Activated naive CD4-positive, alpha-beta T cell treated with anti-CD3 and anti-CD28 coated beads for 36 hours (primary cell): ENCODE measurements at regions of chr6 and their contacts with region 1.

Region 1: GRCh38 chr6:129251669-129252376 is 368.9 kb downstream of the LAMA2 start:
- DNase-seq: peak; percentile 76
- H3K4me3 Mint-ChIP-seq: no peak overlapping the region
- H3K27ac Mint-ChIP-seq: no peak overlapping the region
- H3K4me1 Mint-ChIP-seq: peaks cover 23% of the 10 kb centered on the region
- H3K27me3 Mint-ChIP-seq: peaks cover 13% of the 10 kb centered on the region

Region 2: DNA sequence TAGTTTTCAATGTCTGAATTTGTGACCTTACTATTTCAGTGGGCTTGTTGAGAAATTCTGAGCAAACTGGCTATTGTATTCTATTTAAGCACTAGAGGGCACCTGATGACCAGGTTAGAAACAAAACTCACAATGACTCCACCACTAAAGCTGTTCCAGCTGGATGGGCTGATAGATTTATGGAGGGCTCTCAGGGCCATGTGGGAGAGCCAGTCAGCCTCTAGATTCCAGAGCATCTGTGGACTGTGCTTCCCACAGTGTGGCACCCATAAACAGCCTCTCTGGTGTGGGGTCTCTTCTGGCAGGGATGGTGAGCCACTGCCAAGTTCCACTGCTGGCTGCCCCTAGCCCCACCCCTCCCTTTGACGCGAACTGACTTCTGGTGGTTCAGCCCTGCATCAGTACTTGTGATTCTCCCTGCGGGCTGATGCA is 1645.7 kb before region 1 on chr6:
- CTCF ChIA-PET with region 1: no interaction called
- intact Hi-C with region 1: loop called (anchors 5 kb)
- DNase-seq: no peak
- H3K4me3 Mint-ChIP-seq: no peak overlapping the region
- H3K27ac Mint-ChIP-seq: no peak overlapping the region
- H3K4me1 Mint-ChIP-seq: no peaks in the 10 kb centered on the region
- H3K27me3 Mint-ChIP-seq: no peaks in the 10 kb centered on the region

Region 3: GRCh38 chr6:128327890-128328289 is 923.9 kb before region 1 on chr6:
- CTCF ChIA-PET with region 1: no interaction called
- intact Hi-C with region 1: loop called (anchors 10 kb)
- DNase-seq: peak; percentile 30
- H3K4me3 Mint-ChIP-seq: no peak overlapping the region
- H3K27ac Mint-ChIP-seq: no peak overlapping the region
- H3K4me1 Mint-ChIP-seq: no peaks in the 10 kb centered on the region
- H3K27me3 Mint-ChIP-seq: no peaks in the 10 kb centered on the region

Region 4: DNA sequence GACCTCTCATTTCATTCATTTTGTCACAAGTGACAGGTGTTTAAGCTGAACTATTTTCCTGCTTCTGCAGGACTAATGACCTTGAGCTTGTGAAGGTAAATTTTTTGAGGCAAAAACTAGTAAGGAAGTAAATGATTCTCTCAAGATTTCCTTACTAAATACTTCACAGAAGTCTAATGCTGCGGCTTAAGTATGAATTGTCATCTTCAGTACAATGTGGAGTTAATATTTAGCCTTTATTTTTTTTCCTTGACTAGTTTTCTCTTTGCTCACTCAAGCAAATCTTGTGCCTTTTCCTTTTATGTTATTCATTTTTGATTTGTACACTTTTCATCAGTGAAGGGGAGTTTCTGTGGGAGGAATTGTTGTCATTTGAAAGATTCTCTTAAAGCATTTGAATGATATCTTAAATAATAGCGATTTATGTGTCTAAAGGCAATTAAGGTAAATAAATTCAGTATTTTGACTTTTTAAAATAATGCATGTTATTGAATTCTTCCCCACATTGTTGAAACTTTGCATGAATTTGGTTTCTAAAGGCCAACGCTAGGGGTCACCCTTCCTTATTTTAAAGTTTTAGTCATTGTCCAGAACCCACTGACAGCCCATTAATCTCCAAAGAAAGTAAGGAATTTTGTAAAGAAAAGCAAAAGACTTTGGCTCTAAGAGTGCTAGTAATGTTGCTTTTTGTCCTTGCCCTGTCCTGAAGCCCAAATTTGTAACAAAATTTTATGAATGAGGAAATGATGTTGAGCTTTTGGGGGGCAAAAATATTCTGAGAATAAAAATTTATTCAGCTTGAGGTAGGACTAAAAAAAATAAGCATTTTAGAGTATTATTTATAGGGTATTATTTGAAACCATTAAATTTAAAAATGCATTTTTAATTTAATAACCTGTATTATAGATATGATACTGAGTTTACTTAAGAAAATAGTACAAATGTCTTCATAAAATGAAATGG is 526.3 kb before region 1 on chr6:
- CTCF ChIA-PET with region 1: interaction called, 14 read pairs
- intact Hi-C with region 1: loop called (anchors 1 kb)
- DNase-seq: peak; percentile 31
- H3K4me3 Mint-ChIP-seq: no peak overlapping the region
- H3K27ac Mint-ChIP-seq: no peak overlapping the region
- H3K4me1 Mint-ChIP-seq: no peaks in the 10 kb centered on the region
- H3K27me3 Mint-ChIP-seq: peaks cover 24% of the 10 kb centered on the region

Region 5: GRCh38 chr6:129280749-129281148 is 28.9 kb after region 1 on chr6:
- CTCF ChIA-PET with region 1: no interaction called
- intact Hi-C with region 1: loop called (anchors 1 kb)
- DNase-seq: peak; percentile 76
- H3K4me3 Mint-ChIP-seq: peak overlapping the region; percentile 52
- H3K27ac Mint-ChIP-seq: peak overlapping the region; percentile 10
- H3K4me1 Mint-ChIP-seq: peaks cover 14% of the 10 kb centered on the region
- H3K27me3 Mint-ChIP-seq: no peaks in the 10 kb centered on the region

Region 6: GRCh38 chr6:129454488-129454887 is 202.7 kb after region 1 on chr6:
- CTCF ChIA-PET with region 1: no interaction called
- intact Hi-C with region 1: loop called (anchors 5 kb)
- DNase-seq: no peak
- H3K4me3 Mint-ChIP-seq: no peak overlapping the region
- H3K27ac Mint-ChIP-seq: no peak overlapping the region
- H3K4me1 Mint-ChIP-seq: peaks cover 50% of the 10 kb centered on the region
- H3K27me3 Mint-ChIP-seq: no peaks in the 10 kb centered on the region

Region 7: GRCh38 chr6:129567374-129567773 is 315.6 kb after region 1 on chr6:
- CTCF ChIA-PET with region 1: no interaction called
- intact Hi-C with region 1: loop called (anchors 5 kb)
- DNase-seq: peak; percentile 79
- H3K4me3 Mint-ChIP-seq: no peak overlapping the region
- H3K27ac Mint-ChIP-seq: no peak overlapping the region
- H3K4me1 Mint-ChIP-seq: peaks cover 3% of the 10 kb centered on the region
- H3K27me3 Mint-ChIP-seq: no peaks in the 10 kb centered on the region